AG04450 (cell line): ENCODE measurements at regions of chr6 and their contacts with region 1.

Region 1: DNA sequence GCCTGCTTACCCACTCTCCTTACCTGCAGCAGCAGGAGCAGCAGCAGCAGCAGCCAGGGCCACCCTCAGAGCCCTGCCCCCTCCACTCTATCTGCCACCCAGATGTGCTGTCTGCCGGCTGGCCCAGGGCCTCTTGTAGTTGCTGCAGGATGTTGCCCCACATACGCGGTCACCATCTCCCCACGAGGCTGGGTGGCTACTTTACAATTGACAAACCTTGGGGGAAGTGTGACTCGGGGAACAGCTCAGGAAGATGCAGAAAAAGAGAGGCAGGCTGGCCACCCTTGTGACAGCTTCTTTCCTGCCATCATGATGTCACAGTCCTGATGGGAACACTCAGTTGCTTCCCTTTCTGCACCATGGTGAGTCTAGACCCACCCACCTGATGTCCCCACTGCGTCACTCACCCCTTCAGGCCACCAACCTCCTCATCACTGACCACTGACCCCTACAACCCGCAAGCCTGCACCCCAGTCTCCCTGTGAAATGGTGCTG is 14.5 kb downstream of the TREM1 start:
- DNase-seq: no peak
- H3K4me3 ChIP-seq: no peak overlapping the region
- H3K27ac ChIP-seq: no peak overlapping the region
- H3K27me3 ChIP-seq: peaks cover 8% of the 10 kb centered on the region
- CTCF ChIP-seq: no peak

Region 2: GRCh38 chr6:41247288-41247865 is 24.6 kb before region 1 on chr6:
- CTCF ChIA-PET with region 1: no interaction called
- POLR2A ChIA-PET with region 1: no interaction called
- DNase-seq: no peak
- H3K4me3 ChIP-seq: no peak overlapping the region
- H3K27ac ChIP-seq: no peak overlapping the region
- H3K27me3 ChIP-seq: peaks cover 4% of the 10 kb centered on the region
- CTCF ChIP-seq: no peak

Region 3: DNA sequence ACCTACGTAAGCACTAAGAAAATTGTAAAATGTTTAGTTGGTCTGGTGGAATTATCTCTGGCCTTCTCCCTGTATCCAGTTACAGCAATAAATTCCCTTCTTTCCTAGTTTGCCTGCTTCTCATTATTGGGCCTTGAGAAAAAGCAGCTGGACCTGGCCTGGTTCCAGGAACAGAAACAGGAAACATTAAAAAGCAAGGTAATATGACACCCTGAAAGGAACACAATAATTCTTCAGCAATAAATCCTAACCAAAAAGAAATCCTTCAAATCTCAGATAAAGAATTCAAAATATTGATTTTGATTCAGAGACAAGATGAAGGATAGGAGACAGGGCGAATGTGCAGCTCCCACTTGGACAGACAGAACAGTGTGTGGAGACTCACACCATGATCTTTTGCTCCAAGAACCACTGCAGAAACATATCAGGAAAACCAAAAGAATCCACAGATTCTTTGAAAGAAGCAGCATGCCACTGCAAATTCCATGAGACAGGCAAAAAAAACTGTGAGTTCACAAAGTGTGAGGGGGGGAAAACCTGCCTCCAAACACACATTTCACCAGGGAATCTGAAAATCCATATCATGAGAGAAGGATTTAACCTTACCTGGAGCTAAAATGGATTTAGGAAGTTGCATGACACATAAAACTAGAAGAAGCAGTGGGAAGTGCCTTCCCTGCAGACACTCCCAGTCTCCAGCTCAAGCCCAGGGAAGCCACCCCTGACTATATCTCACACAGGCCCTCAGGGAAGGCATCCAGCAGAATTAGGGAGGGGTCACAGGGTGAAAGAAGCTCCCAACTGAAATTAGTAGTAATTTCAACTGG is 14.4 kb before region 1 on chr6:
- CTCF ChIA-PET with region 1: no interaction called
- POLR2A ChIA-PET with region 1: interaction called, 12 read pairs
- DNase-seq: no peak
- H3K4me3 ChIP-seq: no peak overlapping the region
- H3K27ac ChIP-seq: no peak overlapping the region
- H3K27me3 ChIP-seq: no peaks in the 10 kb centered on the region
- CTCF ChIP-seq: no peak

Region 4: DNA sequence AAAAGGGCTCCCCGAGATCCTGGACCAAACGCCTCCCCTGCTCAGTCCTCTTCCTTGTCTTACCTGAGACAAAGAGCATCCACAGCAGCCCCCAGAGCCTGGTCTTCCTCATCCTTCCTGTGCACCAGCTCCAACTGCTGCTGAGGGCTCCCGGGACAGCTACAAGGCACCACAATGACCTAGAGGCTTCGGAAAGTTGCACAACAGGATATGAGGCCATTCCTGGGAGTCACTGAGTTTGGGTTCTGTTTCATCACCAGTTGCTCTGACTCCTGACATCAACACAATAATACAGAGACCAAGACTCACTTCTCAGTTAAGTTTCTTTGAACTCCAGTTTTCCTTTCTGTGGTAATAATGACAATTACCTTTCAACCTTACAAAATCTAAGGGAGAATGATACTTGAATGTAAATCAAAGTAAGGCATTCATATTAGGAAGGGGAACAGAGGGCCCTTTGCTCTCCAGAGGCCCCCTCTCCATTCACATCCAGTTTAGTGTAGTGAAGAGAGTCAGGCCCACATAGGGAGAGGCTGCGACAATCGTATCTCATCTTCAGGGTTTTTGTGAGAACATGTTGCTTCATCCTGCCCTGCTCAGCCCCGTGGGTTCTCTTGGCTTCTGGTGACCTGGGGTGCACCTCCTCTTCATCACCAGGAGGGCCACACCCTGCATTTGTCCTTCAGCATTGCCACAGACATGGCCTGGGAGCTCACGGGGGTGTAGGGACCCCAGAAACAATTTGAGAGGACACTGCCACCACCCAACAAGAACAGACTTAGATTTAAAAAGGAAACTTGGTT is 14.8 kb after region 1 on chr6 and contains the start of gene TREM1:
- CTCF ChIA-PET with region 1: no interaction called
- POLR2A ChIA-PET with region 1: no interaction called
- DNase-seq: no peak
- H3K4me3 ChIP-seq: no peak within 1 kb of the TSS
- H3K27ac ChIP-seq: no peak within 1 kb of the TSS
- H3K27me3 ChIP-seq: peaks cover 9% of the 10 kb centered on the region
- CTCF ChIP-seq: no peak
- polyA plus RNA-seq, gene TREM1: not detected in 2 replicates